Left cardiac atrium (tissue), 4 donors: ENCODE measurements at regions of chr17 and their contacts with region 1.

Region 1: DNA sequence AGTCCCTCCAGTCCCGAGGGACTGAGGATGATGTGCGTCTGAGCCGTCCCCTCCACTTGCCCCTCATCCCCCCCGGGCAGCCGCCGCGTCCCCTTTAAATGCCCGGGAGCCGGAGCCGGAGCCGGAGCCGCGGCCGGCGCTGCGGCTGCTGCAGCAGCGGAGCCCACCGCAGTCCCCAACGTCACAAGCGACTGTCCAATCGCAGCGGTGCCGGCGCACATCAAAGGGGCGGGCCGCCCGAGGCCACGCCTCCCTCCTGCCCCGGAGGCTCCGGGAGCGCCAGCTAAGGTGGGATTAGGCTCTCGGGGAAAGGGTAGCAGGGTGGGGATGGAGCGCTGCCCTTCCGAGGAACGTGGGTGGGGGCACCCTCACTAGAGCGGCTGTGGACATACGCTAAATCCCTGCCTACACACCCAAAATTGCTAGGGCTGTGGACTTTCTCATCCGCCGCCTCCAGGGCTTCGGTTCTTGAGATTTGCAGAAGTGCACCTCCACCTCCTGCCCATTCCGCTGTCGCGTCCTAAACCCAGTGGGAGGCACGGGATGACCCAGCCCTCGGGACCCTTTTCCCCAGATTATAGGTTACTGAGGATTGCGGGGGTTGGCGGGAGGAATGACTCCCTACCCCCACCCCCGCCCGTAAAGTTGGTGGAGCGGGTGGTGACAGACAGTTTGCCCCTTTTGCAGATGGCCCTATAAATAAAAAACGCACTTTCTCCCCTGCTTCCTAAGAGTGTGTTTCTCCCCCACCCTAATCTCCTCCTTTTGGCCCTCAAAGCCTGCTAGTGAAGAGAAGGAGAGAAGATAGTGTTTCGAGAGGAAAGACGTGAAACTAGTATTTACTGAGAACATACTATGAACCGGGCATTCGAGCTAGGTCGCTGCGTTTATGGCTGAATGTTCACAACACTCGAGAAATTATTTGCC is at the start of gene PHOSPHO1:
- DNase-seq: peak; percentile 91
- ATAC-seq: peak; percentile 97
- total RNA-seq, gene PHOSPHO1: 0.31 to 0.41 TPM

Region 2: DNA sequence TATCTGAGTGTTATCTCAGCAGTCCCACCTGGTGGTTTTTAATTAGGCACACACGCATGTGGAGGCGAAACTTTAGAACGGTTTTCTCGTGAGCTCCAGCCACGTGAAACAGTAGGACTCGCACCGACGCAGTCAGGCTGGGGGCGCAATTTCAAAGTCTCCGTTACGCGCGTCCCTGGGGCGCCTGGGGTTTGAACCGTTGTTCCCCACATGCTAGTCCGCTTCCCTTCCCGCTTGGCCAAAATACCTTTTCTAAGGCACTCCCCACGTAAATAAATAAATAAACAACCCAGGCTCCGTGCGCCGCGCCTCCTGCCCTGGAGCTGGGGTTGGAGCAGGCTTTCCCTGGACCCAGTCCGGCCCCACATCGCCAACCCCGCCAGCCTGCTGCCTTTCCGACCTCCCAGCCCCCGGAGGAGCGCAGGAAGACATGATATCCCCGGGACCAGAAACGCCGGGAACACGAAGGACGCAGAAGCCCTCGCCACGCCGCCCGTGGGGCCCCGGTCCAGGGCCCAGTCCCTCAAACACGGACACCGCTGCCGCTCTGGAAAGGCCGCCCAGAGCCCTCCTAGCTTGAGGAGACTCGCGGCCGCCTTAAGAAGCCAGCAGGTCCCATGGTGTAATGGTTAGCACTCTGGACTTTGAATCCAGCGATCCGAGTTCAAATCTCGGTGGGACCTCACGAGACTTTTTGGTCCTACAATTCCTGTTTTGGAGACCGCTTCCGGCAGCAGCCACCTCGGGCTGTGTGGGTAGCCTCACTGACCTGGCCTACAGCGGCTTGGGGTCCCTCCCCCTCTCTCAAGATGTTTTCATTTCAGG is 38.8 kb before region 1 on chr17:
- intact Hi-C with region 1: loop called (anchors 5 kb)
- DNase-seq: peak; percentile 86
- ATAC-seq: peak; percentile 84 to 89

Region 3: GRCh38 chr17:49290690-49291359 is 59.9 kb after region 1 on chr17:
- intact Hi-C with region 1: loop called (anchors 5 to 10 kb)
- DNase-seq: no peak
- ATAC-seq: peak in 1 of 2 donors; percentile 38